ENCODE measurements at regions of chr3 and their contacts with region 1.

Region 1: DNA sequence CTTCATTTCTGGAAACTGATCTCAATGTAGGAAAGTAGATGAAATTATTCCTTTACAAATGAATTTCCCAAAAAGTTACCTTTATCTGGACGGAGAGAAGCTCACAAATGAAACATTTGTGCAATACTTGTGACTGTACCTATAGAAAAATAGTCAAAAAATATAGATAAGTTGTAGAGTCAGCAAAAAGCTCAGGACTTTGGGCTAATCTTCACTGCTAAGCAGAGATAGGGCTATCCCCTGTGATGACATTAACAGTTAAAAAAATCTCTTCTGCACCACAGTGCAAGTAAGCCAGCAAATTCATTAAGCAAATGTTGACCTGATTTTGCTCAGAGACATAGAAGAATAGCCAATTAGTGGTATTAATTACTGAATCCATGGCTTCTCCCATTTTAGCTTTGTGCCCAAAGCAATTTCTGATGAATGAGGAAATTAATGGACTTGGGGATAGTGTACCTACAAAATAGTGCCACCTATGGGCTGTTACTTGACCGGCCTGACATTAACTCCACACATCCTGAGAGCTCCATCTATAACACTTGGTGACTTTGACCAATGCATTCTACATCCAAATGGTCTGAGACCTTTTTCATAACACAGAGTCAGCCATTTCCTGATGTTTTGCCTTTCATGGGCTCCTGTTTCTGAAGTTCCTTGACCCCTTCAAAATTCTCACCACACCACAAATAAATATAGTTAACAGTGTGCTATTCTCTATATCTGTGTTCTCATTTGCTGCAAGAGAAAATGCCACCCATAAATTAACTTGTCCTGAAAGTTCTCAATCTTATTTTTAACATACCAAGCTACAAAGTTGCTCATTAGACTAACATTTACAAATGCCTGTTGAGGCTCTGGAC is 105.0 kb downstream of the SSR3 start:
- DNase-seq: peak; percentile 28
- H3K4me3 ChIP-seq: no peak overlapping the region
- H3K27ac ChIP-seq: no peak overlapping the region
- H3K4me1 ChIP-seq: no peaks in the 10 kb centered on the region
- H3K27me3 ChIP-seq: peaks cover 3% of the 10 kb centered on the region
- CTCF ChIP-seq: peak; percentile 79 to 82

Region 2: GRCh38 chr3:156174229-156174847 is 275.6 kb before region 1 on chr3:
- CTCF ChIA-PET with region 1: interaction called, 5 read pairs
- dilution Hi-C with region 1: no loop called
- in situ Hi-C with region 1: no loop called
- intact Hi-C with region 1: loop called (anchors 1 kb)
- DNase-seq: peak; percentile 44
- H3K4me3 ChIP-seq: no peak overlapping the region
- H3K27ac ChIP-seq: no peak overlapping the region
- H3K4me1 ChIP-seq: peaks cover 7% of the 10 kb centered on the region
- H3K27me3 ChIP-seq: no peaks in the 10 kb centered on the region
- CTCF ChIP-seq: peak; percentile 26 to 70